ENCODE measurements at regions of chr7 and their contacts with region 1.

Region 1: GRCh38 chr7:135281363-135281949 is 47.8 kb downstream of the STRA8 start:
- DNase-seq: peak; percentile 69
- H3K4me3 ChIP-seq: no peak overlapping the region
- H3K27ac ChIP-seq: no peak overlapping the region
- H3K4me1 ChIP-seq: peaks cover 20% of the 10 kb centered on the region
- H3K27me3 ChIP-seq: no peaks in the 10 kb centered on the region
- CTCF ChIP-seq: peak; percentile 99

Region 2: GRCh38 chr7:133912916-133913697 is 1368.3 kb before region 1 on chr7:
- CTCF ChIA-PET with region 1: no interaction called
- dilution Hi-C with region 1: no loop called
- in situ Hi-C with region 1: no loop called
- intact Hi-C with region 1: no loop called
- DNase-seq: peak; percentile 95
- H3K4me3 ChIP-seq: no peak overlapping the region
- H3K27ac ChIP-seq: peak overlapping the region; percentile 56
- H3K4me1 ChIP-seq: peaks cover 32% of the 10 kb centered on the region
- H3K27me3 ChIP-seq: no peaks in the 10 kb centered on the region
- CTCF ChIP-seq: no peak

Region 3: GRCh38 chr7:135211179-135211945 is 70.1 kb before region 1 on chr7 and contains the start of gene WDR91:
- CTCF ChIA-PET with region 1: no interaction called
- dilution Hi-C with region 1: no loop called
- in situ Hi-C with region 1: no loop called
- intact Hi-C with region 1: no loop called
- DNase-seq: peak; percentile 93
- H3K4me3 ChIP-seq: peak within 1 kb of the TSS; percentile 80 to 87 (median 81)
- H3K27ac ChIP-seq: peak within 1 kb of the TSS; percentile 82
- H3K4me1 ChIP-seq: peaks cover 36% of the 10 kb centered on the region
- H3K27me3 ChIP-seq: no peaks in the 10 kb centered on the region
- CTCF ChIP-seq: peak in 1 of 2 donors; percentile 6
- total RNA-seq, gene WDR91: 31.5 to 33.8 TPM

Region 4: DNA sequence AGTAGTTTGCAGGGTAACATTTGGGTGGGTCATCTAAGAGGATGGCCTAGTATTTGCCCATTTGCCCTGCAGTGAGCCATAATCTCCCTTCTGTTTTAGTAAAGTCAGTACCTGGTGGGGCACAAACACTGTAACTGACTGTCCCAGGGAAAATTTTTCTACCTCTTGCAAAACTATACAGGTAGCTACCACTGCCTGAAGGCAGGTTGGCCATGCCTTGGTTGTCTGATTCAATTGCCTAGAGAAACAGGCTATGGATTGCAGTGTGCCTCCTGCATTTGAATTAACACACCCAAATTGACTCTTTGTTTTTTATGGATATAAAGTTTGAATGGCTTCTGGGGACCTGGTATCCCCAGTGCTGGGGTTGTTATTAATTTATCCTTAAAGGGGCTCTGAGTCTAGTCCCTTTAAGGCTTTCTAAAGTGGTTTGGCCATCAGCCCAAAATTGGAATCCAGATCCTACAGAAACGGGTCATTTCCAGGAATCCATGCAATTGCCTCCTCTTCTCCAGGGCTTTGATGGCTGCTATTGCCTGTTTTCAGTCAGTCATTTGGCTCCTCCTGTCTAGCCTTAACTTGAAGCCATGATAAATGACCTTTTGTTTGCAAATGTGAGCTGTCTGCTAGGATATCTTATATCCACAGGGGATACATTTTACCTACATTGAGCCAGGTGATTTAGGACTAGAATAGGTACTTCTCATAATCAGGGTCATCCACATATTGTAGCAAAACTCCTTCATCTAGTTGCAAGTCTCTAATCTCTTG is 41.3 kb after region 1 on chr7:
- CTCF ChIA-PET with region 1: no interaction called
- dilution Hi-C with region 1: no loop called
- in situ Hi-C with region 1: no loop called
- intact Hi-C with region 1: no loop called
- DNase-seq: no peak
- H3K4me3 ChIP-seq: no peak overlapping the region
- H3K27ac ChIP-seq: no peak overlapping the region
- H3K4me1 ChIP-seq: peaks cover 7% of the 10 kb centered on the region
- H3K27me3 ChIP-seq: no peaks in the 10 kb centered on the region
- CTCF ChIP-seq: no peak

Region 5: DNA sequence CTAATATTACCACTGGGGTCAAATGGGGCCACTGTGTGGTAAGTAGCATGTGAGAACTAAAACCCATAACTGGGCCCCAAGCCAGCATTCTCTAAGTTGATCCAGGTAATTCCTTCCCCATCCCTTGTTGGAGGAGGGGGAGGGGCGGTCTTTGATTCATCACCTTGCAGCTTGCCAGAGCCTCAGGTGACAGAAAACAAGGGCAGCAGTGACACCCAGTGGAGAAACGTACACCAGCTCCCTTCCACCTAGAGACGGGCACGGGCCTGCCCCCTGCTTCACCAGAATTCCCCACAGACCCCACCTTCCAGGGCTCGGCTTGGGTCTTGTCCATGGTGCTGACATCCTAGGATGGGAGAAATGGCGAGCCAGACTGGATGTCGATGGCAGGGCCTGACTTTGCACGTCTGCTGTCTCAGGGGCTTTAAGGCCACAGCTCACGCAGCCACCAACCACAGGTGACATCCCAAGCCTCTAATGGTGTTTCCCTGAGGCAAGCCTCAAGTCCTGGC is 54.2 kb after region 1 on chr7:
- CTCF ChIA-PET with region 1: interaction called, 8 read pairs
- dilution Hi-C with region 1: no loop called
- in situ Hi-C with region 1: loop called (anchors 5 kb)
- intact Hi-C with region 1: loop called (anchors 1 kb)
- DNase-seq: peak; percentile 98
- H3K4me3 ChIP-seq: no peak overlapping the region
- H3K27ac ChIP-seq: no peak overlapping the region
- H3K4me1 ChIP-seq: peaks cover 22% of the 10 kb centered on the region
- H3K27me3 ChIP-seq: no peaks in the 10 kb centered on the region
- CTCF ChIP-seq: peak; percentile 85 to 90

Region 6: GRCh38 chr7:135509903-135510602 is 228.6 kb after region 1 on chr7 and contains the start of gene CNOT4:
- CTCF ChIA-PET with region 1: no interaction called
- dilution Hi-C with region 1: no loop called
- in situ Hi-C with region 1: no loop called
- intact Hi-C with region 1: loop called (anchors 1 kb)
- DNase-seq: peak; percentile 96
- H3K4me3 ChIP-seq: peak within 1 kb of the TSS; percentile 73 to 91 (median 86)
- H3K27ac ChIP-seq: peak within 1 kb of the TSS; percentile 95
- H3K4me1 ChIP-seq: peaks cover 7% of the 10 kb centered on the region
- H3K27me3 ChIP-seq: no peaks in the 10 kb centered on the region
- CTCF ChIP-seq: no peak
- total RNA-seq, gene CNOT4: 12.7 to 23.1 TPM

Region 7: DNA sequence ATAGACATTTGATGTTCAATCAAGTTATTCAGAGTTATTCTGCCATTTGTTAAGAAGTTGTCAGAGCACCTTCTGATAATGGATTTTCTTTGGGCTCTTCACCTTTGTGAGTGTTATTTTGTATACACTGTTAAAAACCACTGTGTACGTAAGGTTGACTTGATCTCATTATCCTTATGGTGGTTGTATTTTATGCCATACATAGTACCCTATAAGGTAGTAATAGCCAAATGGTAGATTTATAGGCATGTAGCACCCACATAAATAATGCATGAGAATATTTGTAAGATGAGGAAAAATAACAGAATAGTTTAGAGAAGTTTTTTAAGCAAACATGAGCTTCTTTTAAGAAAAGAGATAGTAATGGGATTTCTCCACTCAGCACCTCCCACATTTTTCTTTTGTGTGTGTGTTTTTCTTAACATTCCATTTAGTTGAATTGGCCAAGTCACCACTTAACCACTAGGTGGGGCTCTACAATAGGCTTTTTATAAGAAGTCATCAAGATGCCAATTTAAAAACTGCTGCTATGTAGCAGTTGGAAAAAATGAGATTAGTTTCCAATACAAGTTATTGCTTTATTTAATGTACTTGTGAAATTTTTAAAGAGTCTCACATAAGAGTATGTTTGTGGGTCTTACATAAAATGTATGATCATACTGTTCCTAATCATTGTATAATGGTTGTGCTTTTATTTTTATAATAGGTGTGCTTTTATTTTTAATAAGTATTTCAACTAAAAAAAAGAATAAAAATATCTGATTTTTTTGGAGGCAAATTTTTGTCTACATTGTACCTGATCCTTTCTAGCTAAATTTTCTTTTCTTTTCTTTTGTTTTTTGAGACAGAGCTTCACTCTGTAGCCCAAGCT is 339.8 kb after region 1 on chr7:
- CTCF ChIA-PET with region 1: no interaction called
- dilution Hi-C with region 1: no loop called
- in situ Hi-C with region 1: no loop called
- intact Hi-C with region 1: loop called (anchors 1 kb)
- DNase-seq: peak; percentile 73
- H3K4me3 ChIP-seq: no peak overlapping the region
- H3K27ac ChIP-seq: peak overlapping the region; percentile 57
- H3K4me1 ChIP-seq: no peaks in the 10 kb centered on the region
- H3K27me3 ChIP-seq: no peaks in the 10 kb centered on the region
- CTCF ChIP-seq: peak; percentile 80 to 90

Region 8: GRCh38 chr7:135662373-135663114 is 381.1 kb after region 1 on chr7 and contains the start of gene STMP1:
- CTCF ChIA-PET with region 1: no interaction called
- dilution Hi-C with region 1: no loop called
- in situ Hi-C with region 1: no loop called
- intact Hi-C with region 1: loop called (anchors 5 kb)
- DNase-seq: peak; percentile 89
- H3K4me3 ChIP-seq: peak within 1 kb of the TSS; percentile 97 to 99 (median 98)
- H3K27ac ChIP-seq: peak within 1 kb of the TSS; percentile 77
- H3K4me1 ChIP-seq: peaks cover 22% of the 10 kb centered on the region
- H3K27me3 ChIP-seq: no peaks in the 10 kb centered on the region
- CTCF ChIP-seq: peak in 1 of 2 donors; percentile 31
- total RNA-seq, gene STMP1: 19.5 to 39.3 TPM

Measured in mammary epithelial cell (primary cell).